HepG2 (cell line): ENCODE measurements at regions of chr21 and their contacts with region 1.

Region 1: GRCh38 chr21:42145569-42146272 is 73.2 kb upstream of the ABCG1 start:
- DNase-seq: peak; percentile 33
- ATAC-seq: peak; percentile 80
- H3K4me3 ChIP-seq: no peak overlapping the region
- H3K27ac ChIP-seq: no peak overlapping the region
- H3K4me1 ChIP-seq: peaks cover 7% of the 10 kb centered on the region; the same call in 1 of the 2 replicates
- H3K27me3 ChIP-seq: peaks cover 4 to 35% of the 10 kb centered on the region in 2 experiments; a peak in 3 of 5 replicates
- CTCF ChIP-seq: peak; percentile 88
- EP300 ChIP-seq: no peak
- POLR2A ChIP-seq: no peak
- RAD21 ChIP-seq: peak; percentile 81

Region 2: GRCh38 chr21:42258153-42258884 is 112.6 kb after region 1 on chr21:
- CTCF ChIA-PET with region 1: interaction called, 20 read pairs
- POLR2A ChIA-PET with region 1: no interaction called
- in situ Hi-C with region 1: loop called (anchors 5 kb)
- intact Hi-C with region 1: loop called (anchors 1 kb)
- DNase-seq: peak; percentile 34
- ATAC-seq: peak; percentile 86
- H3K4me3 ChIP-seq: no peak overlapping the region
- H3K27ac ChIP-seq: no peak overlapping the region
- H3K4me1 ChIP-seq: peaks cover 23% of the 10 kb centered on the region
- H3K27me3 ChIP-seq: peaks cover 2 to 38% of the 10 kb centered on the region in 2 experiments; a peak in 3 of 5 replicates
- CTCF ChIP-seq: peak; percentile 75
- EP300 ChIP-seq: no peak
- POLR2A ChIP-seq: no peak
- RAD21 ChIP-seq: peak; percentile 62

Region 3: DNA sequence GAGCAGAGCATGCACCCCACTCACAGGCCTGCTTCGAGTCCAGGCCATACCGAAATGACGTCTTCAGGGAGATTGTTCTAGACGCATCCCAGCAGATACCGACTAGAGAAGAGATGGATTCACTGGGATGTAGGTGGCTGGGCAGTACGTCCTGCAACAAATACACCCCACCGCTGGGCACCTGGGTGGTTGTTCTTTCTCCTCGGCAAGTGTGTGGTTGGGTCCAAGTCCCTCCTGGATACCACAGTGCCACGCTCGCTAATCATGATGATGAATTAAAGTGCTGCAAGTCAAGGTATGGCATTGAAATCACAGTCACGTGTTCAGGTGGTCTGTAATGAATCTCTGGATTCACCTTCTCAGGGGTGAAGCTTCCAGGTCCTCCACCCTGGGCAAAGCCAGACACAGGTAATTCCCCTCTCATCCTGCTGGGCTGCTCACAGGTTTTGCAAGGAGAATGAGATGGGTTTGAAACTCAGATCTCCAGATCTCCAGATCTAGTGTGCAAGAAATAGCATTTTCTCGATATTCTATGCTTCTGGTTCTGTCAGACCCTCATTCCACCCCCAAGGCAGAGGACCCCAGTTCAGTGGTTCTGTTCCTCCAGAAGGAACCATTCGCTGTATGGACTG is 303.7 kb after region 1 on chr21:
- CTCF ChIA-PET with region 1: interaction called, 18 read pairs
- POLR2A ChIA-PET with region 1: no interaction called
- in situ Hi-C with region 1: loop called (anchors 10 kb)
- intact Hi-C with region 1: loop called (anchors 1 kb)
- DNase-seq: no peak
- ATAC-seq: no peak
- H3K4me3 ChIP-seq: no peak overlapping the region
- H3K27ac ChIP-seq: no peak overlapping the region
- H3K4me1 ChIP-seq: peaks cover 4% of the 10 kb centered on the region; the same call in 1 of the 2 replicates
- H3K27me3 ChIP-seq: peaks cover 0 to 9% of the 10 kb centered on the region in 2 experiments; a peak in 2 of 5 replicates
- CTCF ChIP-seq: no peak
- EP300 ChIP-seq: no peak
- POLR2A ChIP-seq: no peak
- RAD21 ChIP-seq: no peak

Region 4: GRCh38 chr21:42454786-42455580 is 309.3 kb after region 1 on chr21:
- CTCF ChIA-PET with region 1: interaction called, 18 read pairs
- POLR2A ChIA-PET with region 1: no interaction called
- in situ Hi-C with region 1: no loop called
- intact Hi-C with region 1: loop called (anchors 1 kb)
- DNase-seq: no peak
- ATAC-seq: no peak
- H3K4me3 ChIP-seq: no peak overlapping the region
- H3K27ac ChIP-seq: no peak overlapping the region
- H3K4me1 ChIP-seq: peaks cover 4% of the 10 kb centered on the region; the same call in 1 of the 2 replicates
- H3K27me3 ChIP-seq: peaks cover 0 to 12% of the 10 kb centered on the region in 2 experiments; a peak in 2 of 5 replicates
- CTCF ChIP-seq: no peak
- EP300 ChIP-seq: no peak
- POLR2A ChIP-seq: no peak
- RAD21 ChIP-seq: no peak